Ovary (tissue), 10 donors: ENCODE measurements at regions of chr21 and their contacts with region 1.

Region 1: GRCh38 chr21:42117229-42117966 is 46.3 kb downstream of the UMODL1 start:
- DNase-seq: peak; percentile 58 to 82 (median 77)
- H3K4me3 ChIP-seq: no peak overlapping the region
- H3K27ac ChIP-seq: no peak overlapping the region
- H3K4me1 ChIP-seq: no peaks in the 10 kb centered on the region
- H3K27me3 ChIP-seq: no peaks in the 10 kb centered on the region
- CTCF ChIP-seq: peak; percentile 88 to 89 (median 89)
- EP300 ChIP-seq: no peak
- POLR2A ChIP-seq: no peak

Region 2: GRCh38 chr21:41289426-41289825 is 828.0 kb before region 1 on chr21:
- intact Hi-C with region 1: loop called in 1 of 4 experiments (anchors 5 kb)
- DNase-seq: no peak
- H3K4me3 ChIP-seq: no peak overlapping the region
- H3K27ac ChIP-seq: no peak overlapping the region
- H3K4me1 ChIP-seq: peaks cover 2% of the 10 kb centered on the region
- H3K27me3 ChIP-seq: no peaks in the 10 kb centered on the region
- CTCF ChIP-seq: no peak
- EP300 ChIP-seq: no peak
- POLR2A ChIP-seq: no peak

Region 3: GRCh38 chr21:41601573-41602368 is 515.6 kb before region 1 on chr21:
- intact Hi-C with region 1: loop called in 1 of 4 experiments (anchors 5 kb)
- DNase-seq: no peak
- H3K4me3 ChIP-seq: no peak overlapping the region
- H3K27ac ChIP-seq: no peak overlapping the region
- H3K4me1 ChIP-seq: peaks cover 3% of the 10 kb centered on the region
- H3K27me3 ChIP-seq: no peaks in the 10 kb centered on the region
- CTCF ChIP-seq: no peak
- EP300 ChIP-seq: no peak
- POLR2A ChIP-seq: no peak

Region 4: DNA sequence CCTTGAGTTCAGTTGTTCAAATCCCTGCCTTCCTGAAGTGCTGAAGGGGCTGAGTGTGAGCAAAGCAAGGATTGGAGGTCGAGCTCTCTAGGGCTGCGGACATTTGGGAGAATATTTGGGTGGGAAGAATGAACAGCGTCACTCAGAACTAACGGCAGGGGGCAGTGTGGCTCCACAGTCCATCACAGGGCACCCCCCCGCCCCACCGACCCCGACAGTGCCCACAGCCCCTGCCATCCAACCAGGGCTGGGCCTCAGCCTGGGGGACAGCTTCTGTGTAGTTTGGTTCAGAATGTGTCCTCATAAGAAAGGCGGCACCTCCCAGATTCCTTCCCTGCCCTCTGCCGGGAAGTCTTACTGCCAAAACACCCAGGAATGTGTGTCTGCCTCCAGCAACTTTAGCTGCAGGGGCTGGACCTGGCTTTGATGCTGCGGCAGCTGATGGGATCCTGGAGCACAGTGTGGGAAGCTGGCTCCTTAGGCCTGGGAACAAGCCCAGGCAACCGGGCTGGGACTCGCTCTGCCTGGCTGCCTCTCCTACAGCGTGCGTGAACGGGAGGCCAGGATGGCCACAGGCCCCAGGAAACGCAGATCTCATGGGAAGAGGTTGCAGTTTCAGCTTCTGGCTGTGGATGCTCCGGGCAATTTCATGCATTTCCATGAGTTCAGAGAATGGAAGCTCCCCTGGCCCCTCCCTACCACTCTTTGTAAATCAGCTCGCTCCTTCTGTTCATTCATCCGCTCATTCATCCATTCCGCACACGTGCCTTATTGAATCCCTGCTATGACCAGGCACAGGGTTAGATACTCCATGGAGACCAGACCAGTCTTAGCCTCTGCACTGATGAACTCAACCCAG is 504.5 kb before region 1 on chr21:
- intact Hi-C with region 1: loop called in 1 of 4 experiments (anchors 2 kb)
- DNase-seq: peak; percentile 74 to 88 (median 79)
- H3K4me3 ChIP-seq: no peak overlapping the region
- H3K27ac ChIP-seq: peak overlapping the region; percentile 2 to 22
- H3K4me1 ChIP-seq: peaks cover 1% of the 10 kb centered on the region
- H3K27me3 ChIP-seq: no peaks in the 10 kb centered on the region
- CTCF ChIP-seq: peak; percentile 48 to 81 (median 60)
- EP300 ChIP-seq: no peak
- POLR2A ChIP-seq: no peak

Region 5: GRCh38 chr21:41622831-41623548 is 494.4 kb before region 1 on chr21:
- intact Hi-C with region 1: loop called in 1 of 4 experiments (anchors 10 kb)
- DNase-seq: no peak
- H3K4me3 ChIP-seq: no peak overlapping the region
- H3K27ac ChIP-seq: no peak overlapping the region
- H3K4me1 ChIP-seq: no peaks in the 10 kb centered on the region
- H3K27me3 ChIP-seq: no peaks in the 10 kb centered on the region
- CTCF ChIP-seq: no peak
- EP300 ChIP-seq: no peak
- POLR2A ChIP-seq: no peak

Region 6: DNA sequence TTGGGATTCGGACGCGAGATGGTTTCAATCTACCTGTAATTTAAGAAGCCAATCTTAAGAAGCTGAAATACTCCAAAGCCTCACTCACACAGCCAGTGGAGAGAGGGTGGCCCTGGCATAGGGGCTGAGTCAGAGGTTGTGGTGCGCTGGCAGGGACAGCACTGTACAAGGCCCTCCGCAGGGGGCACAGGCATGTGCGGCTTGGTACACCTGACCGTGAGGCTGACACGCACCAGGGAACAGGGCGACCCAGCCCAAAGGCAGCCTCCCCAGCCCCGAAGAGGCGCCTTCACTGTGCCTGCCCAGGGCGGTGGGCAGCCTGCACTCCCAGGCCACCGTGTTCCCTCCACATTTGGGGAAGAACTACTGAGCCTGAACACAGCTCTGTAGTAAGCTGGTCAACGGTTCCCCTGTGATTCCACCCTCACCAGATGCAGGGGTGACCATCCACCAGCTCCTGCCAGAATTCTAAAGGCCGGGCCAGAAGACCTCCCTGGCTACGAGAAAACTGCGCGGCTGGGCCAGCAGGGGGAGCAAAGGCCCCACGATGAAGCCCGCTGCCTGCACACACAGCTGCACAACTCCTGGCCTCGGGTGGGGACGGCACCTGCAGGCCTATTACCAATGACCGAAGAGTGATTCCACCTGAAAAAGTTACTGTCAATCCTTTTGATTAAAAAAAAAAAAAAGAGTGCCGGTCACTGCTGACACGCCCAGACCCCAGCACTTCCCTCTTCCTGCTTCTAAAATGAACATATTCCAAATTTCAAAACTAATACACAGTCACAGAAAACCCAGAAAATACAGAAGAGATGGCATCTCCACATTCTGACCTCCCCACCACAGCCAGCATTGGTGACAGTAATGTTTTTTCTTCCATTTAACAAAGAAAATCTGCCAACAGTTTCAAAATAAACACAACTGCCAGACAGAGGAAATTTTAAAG is 300.9 kb before region 1 on chr21:
- intact Hi-C with region 1: loop called (anchors 1 to 5 kb)
- DNase-seq: peak; percentile 60 to 78 (median 72)
- H3K4me3 ChIP-seq: no peak overlapping the region
- H3K27ac ChIP-seq: no peak overlapping the region
- H3K4me1 ChIP-seq: no peaks in the 10 kb centered on the region
- H3K27me3 ChIP-seq: no peaks in the 10 kb centered on the region
- CTCF ChIP-seq: peak; percentile 56 to 74 (median 61)
- EP300 ChIP-seq: no peak
- POLR2A ChIP-seq: no peak

Region 7: DNA sequence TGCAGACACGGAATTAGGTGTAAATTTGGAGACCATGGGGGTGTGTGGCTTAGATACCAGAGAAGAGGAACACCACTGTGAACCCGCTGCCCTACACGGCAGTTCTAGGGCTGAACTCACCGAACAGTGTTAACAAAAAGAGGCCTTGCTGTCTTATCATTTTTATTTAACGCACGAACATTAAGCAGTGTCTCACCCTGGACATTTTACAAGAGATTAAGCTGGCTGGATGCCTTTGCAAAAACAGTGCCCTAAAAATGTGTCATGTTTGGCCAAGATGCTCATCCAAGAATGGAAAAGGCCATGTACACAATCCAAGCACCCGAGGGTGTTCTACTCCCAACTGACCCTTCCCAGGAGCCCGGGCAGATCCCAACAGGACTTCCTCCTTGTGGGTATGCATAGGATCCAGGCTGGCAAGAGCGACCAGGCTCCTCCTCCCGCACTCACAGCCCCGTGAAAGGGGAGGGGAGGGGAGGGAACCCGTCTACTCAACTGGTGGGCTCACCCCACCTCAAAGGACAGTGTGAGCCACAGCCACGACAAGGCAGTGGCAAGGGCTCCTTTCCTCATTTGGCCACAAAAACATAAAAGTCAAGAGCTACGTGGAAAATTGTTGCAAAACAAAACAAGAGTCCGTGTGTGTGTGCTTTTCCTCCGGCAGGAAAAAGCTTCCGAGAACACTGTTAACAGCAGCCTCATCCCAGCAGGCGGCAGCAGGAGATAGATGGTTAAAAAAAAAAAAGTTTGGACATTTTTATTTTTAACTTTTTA is 183.9 kb before region 1 on chr21:
- intact Hi-C with region 1: loop called in 1 of 4 experiments (anchors 10 kb)
- DNase-seq: peak in 3 of 5 donors; percentile 37 to 54 (median 52)
- H3K4me3 ChIP-seq: no peak overlapping the region
- H3K27ac ChIP-seq: peak overlapping the region; percentile 32 to 64
- H3K4me1 ChIP-seq: peaks cover 20% of the 10 kb centered on the region
- H3K27me3 ChIP-seq: no peaks in the 10 kb centered on the region
- CTCF ChIP-seq: peak in 1 of 3 donors; percentile 30
- EP300 ChIP-seq: no peak
- POLR2A ChIP-seq: no peak

Region 8: DNA sequence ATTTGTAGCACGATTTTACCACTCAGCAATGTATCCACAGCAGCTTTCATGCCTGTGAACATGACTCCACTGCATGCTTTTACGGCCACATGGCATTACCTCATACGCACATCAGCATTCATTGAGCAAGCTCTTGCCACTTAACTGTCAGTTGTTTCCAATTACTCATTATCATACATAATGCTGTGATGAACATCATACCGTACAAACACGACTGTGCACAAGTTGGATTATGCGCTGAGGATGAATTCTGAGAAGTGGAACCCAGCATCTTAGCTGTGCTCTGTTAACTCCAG is 36.7 kb before region 1 on chr21:
- intact Hi-C with region 1: no loop called
- DNase-seq: no peak
- H3K4me3 ChIP-seq: no peak overlapping the region
- H3K27ac ChIP-seq: no peak overlapping the region
- H3K4me1 ChIP-seq: no peaks in the 10 kb centered on the region
- H3K27me3 ChIP-seq: no peaks in the 10 kb centered on the region
- CTCF ChIP-seq: no peak
- EP300 ChIP-seq: no peak
- POLR2A ChIP-seq: no peak

Region 9: DNA sequence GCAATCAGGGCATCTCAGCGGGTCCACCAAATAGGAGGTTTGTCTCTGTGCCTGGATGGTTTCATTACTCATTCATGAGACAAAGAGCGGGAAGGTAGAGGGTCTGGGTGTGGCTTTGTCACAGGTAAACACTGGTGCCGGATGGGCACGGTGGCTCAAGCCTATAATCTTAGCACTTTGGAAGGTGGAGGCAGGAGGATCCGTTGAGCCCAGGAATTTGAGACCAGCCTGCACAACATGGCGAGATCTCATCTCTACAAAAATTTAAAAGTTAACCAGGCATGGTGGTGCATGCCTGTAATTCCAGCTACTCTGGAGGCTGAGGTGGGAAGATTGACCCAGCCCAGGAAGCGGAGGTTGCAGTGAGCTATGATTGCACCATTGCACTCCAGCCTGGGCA is 824.4 kb after region 1 on chr21:
- intact Hi-C with region 1: no loop called
- DNase-seq: no peak
- H3K4me3 ChIP-seq: no peak overlapping the region
- H3K27ac ChIP-seq: no peak overlapping the region
- H3K4me1 ChIP-seq: no peaks in the 10 kb centered on the region
- H3K27me3 ChIP-seq: no peaks in the 10 kb centered on the region
- CTCF ChIP-seq: no peak
- EP300 ChIP-seq: no peak
- POLR2A ChIP-seq: no peak